H1 (cell line): ENCODE measurements at regions of chr20 and their contacts with region 1.

Region 1: DNA sequence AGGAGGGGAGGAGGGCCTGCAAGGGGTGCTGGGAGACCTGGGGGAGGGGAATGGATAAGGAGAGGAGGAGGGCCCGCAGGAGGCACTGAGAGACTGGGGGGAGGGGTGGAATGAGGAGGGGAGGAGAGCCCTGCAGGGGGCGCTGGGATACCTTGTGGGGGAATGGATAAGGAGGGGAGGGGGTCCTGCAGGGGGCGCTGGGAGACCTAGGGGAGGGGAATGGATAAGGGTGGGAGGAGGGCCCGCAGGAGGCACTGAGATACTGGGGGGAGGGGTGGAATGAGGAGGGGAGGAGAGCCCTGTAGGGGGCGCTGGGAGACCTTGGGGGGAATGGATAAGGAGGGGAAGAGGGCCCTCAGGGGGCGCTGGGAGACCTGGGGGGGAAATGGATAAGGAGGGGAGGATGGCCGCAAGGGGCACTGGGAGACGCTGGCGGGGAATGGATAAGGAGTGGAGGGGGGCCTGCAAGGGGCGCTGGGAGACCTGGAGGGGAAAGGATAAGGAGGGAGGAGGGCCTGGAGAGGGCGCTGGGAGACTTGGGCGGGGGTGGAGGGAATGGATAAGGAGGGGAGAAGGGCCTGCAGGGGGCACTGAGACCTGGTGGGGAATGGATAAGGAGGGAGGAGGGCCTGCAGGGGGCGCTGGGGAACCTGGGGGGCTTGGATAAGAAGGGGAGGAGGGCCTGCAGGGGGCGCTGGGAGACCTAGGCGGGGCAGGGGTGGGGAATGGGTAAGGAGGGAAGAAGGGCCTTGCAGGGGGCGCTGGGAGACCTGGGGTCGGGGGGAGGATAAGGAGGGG is 1.3 kb upstream of the CTCFL start:
- DNase-seq: peak in 1 of 2 experiments; percentile 74
- H3K4me3 ChIP-seq: no peak overlapping the region
- H3K27ac ChIP-seq: no peak overlapping the region
- H3K4me1 ChIP-seq: peaks cover 0 to 19% (median 5%) of the 10 kb centered on the region in 4 experiments; a peak in 5 of 7 replicates
- H3K27me3 ChIP-seq: no peaks in the 10 kb centered on the region; a peak in 2 of 7 replicates
- CTCF ChIP-seq: peak; percentile 32 to 97 (median 59)
- EP300 ChIP-seq: no peak
- POLR2A ChIP-seq: no peak
- RAD21 ChIP-seq: peak; percentile 13 to 20; a peak in 3 of 4 replicates

Region 2: GRCh38 chr20:57464715-57465211 is 61.5 kb before region 1 on chr20:
- CTCF ChIA-PET with region 1: no interaction called
- POLR2A ChIA-PET with region 1: no interaction called
- DNase-seq: no peak
- H3K4me3 ChIP-seq: no peak overlapping the region
- H3K27ac ChIP-seq: 0 out of 2 replicates have a peak overlapping the region, but pooled peaks have one; percentile 7
- H3K4me1 ChIP-seq: peaks cover 0 to 11% (median 3%) of the 10 kb centered on the region in 4 experiments; a peak in 5 of 7 replicates
- H3K27me3 ChIP-seq: no peaks in the 10 kb centered on the region; a peak in 1 of 7 replicates
- CTCF ChIP-seq: peak; percentile 48 to 61 (median 55)
- EP300 ChIP-seq: no peak
- POLR2A ChIP-seq: no peak
- RAD21 ChIP-seq: peak in 1 of 2 experiments; percentile 4; a peak in 1 of 4 replicates

Region 3: GRCh38 chr20:57540890-57541580 is 14.7 kb after region 1 on chr20:
- CTCF ChIA-PET with region 1: interaction called, 13 read pairs
- POLR2A ChIA-PET with region 1: no interaction called
- DNase-seq: no peak
- H3K4me3 ChIP-seq: no peak overlapping the region
- H3K27ac ChIP-seq: no peak overlapping the region
- H3K4me1 ChIP-seq: no peaks in the 10 kb centered on the region
- H3K27me3 ChIP-seq: no peaks in the 10 kb centered on the region
- CTCF ChIP-seq: no peak
- EP300 ChIP-seq: no peak
- POLR2A ChIP-seq: no peak
- RAD21 ChIP-seq: no peak

Region 4: GRCh38 chr20:57546956-57547649 is 20.8 kb after region 1 on chr20:
- CTCF ChIA-PET with region 1: interaction called, 13 read pairs
- POLR2A ChIA-PET with region 1: no interaction called
- DNase-seq: no peak
- H3K4me3 ChIP-seq: no peak overlapping the region
- H3K27ac ChIP-seq: no peak overlapping the region
- H3K4me1 ChIP-seq: no peaks in the 10 kb centered on the region
- H3K27me3 ChIP-seq: no peaks in the 10 kb centered on the region
- CTCF ChIP-seq: no peak
- EP300 ChIP-seq: no peak
- POLR2A ChIP-seq: no peak
- RAD21 ChIP-seq: no peak

Region 5: DNA sequence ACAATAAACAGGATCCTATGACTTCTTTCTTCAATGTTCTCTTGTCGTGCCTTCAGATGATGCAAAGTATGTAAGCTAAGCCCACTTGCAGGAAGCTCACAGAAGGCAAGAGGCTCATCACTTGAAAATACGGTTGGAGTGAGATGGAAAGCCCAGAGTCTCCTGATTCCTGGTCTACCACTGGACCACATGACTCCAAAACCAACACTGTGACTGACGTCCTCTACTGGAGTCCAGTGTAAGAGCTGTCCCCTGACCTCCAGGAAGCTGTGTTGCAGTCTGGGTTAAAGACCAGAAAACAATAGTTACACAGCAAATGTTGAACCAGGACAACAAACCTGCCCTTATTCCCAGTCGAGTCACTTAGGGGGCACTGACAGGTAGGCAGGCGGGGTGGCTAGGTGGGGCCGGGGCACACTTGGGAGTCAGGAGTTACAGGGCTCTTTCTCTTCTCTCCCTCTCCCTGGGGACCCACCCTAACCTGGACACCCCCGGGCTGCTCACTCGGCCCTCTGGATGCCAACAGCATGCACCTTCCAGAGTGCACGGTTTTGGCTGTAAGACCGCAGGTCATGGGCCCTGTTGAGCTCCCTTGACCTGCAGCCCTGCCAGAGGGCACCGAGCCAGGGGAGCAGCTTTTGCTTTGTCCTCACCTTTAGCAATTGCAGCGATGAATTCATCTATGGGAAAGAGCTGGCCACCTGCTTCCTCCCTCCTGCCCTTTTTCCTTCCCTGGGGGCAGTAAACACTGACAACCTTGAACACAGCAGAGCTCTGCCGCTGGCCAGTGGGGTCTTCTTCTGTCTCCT is 42.0 kb after region 1 on chr20:
- CTCF ChIA-PET with region 1: interaction called, 11 read pairs
- POLR2A ChIA-PET with region 1: interaction called, 4 read pairs
- DNase-seq: no peak
- H3K4me3 ChIP-seq: no peak overlapping the region
- H3K27ac ChIP-seq: no peak overlapping the region
- H3K4me1 ChIP-seq: peaks cover 0 to 4% (median 1%) of the 10 kb centered on the region in 4 experiments; a peak in 3 of 7 replicates
- H3K27me3 ChIP-seq: peaks cover 0 to 4% (median 0%) of the 10 kb centered on the region in 4 experiments; a peak in 3 of 7 replicates
- CTCF ChIP-seq: no peak
- EP300 ChIP-seq: no peak
- POLR2A ChIP-seq: no peak
- RAD21 ChIP-seq: no peak

Region 6: GRCh38 chr20:57582432-57583305 is 56.4 kb after region 1 on chr20:
- CTCF ChIA-PET with region 1: interaction called, 28 read pairs
- POLR2A ChIA-PET with region 1: no interaction called
- DNase-seq: peak in 1 of 2 experiments; percentile 63
- H3K4me3 ChIP-seq: no peak overlapping the region
- H3K27ac ChIP-seq: no peak overlapping the region
- H3K4me1 ChIP-seq: peaks cover 0 to 2% (median 0%) of the 10 kb centered on the region in 4 experiments; a peak in 1 of 7 replicates
- H3K27me3 ChIP-seq: peaks cover 0 to 2% (median 0%) of the 10 kb centered on the region in 4 experiments; a peak in 2 of 7 replicates
- CTCF ChIP-seq: peak; percentile 65 to 85 (median 69)
- EP300 ChIP-seq: no peak
- POLR2A ChIP-seq: no peak
- RAD21 ChIP-seq: peak; percentile 37 to 53; a peak in 3 of 4 replicates